ENCODE measurements at regions of chr19 and their contacts with region 1.

Region 1: GRCh38 chr19:13784731-13785452 is 10.4 kb upstream of the ZSWIM4 start:
- DNase-seq: peak; percentile 65 to 86
- ATAC-seq: peak; percentile 60

Region 2: GRCh38 chr19:13742756-13743155 is 42.1 kb before region 1 on chr19:
- intact Hi-C with region 1: no loop called
- DNase-seq: no peak
- ATAC-seq: no peak

Region 3: GRCh38 chr19:13861732-13862531 is 77.0 kb after region 1 on chr19:
- intact Hi-C with region 1: loop called (anchors 5 to 10 kb)
- DNase-seq: peak; percentile 92 to 94
- ATAC-seq: peak; percentile 87